ENCODE measurements at regions of chr22 and their contacts with region 1.

Region 1: DNA sequence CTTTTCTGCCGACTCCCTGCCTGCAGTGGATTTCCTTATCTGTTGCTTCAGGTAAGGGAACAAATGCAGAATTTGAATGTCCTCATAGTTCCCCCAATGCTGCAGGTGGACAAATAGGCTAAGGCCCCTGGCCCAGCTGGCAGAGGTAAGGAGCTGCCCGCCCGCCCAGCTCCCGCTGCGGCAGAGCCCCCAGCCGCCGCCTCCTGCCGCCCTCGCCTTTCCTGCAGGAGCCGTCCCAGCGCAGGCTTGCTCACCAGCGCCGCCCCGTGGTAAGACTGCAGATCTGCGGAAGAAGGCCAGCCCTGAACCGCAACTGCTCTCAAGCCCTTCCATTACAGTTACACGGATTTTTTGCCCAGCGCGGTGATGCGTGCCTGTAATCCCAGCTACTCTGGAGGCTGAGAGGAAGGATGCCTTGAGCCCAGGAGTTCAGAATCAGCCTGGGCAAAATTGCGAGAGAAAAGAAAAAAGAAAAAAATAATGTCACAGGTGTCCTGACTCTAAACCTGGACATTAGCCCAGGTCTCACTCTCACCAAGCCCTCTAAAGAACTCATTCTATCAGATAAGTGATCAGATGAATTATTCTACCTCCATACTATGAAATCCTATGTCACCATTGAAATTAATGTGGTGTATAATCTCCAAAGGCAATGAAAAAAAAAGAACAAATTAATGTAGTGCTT is 51.2 kb upstream of the EMID1 start:
- DNase-seq: peak in 1 of 2 donors; percentile 82
- H3K4me3 ChIP-seq: peak overlapping the region; percentile 7 to 47
- H3K27ac ChIP-seq: no peak overlapping the region
- H3K4me1 ChIP-seq: peaks cover 3 to 15% of the 10 kb centered on the region in 2 donors
- H3K27me3 ChIP-seq: no peaks in the 10 kb centered on the region
- CTCF ChIP-seq: peak; percentile 84 to 99 (median 96)

Region 2: DNA sequence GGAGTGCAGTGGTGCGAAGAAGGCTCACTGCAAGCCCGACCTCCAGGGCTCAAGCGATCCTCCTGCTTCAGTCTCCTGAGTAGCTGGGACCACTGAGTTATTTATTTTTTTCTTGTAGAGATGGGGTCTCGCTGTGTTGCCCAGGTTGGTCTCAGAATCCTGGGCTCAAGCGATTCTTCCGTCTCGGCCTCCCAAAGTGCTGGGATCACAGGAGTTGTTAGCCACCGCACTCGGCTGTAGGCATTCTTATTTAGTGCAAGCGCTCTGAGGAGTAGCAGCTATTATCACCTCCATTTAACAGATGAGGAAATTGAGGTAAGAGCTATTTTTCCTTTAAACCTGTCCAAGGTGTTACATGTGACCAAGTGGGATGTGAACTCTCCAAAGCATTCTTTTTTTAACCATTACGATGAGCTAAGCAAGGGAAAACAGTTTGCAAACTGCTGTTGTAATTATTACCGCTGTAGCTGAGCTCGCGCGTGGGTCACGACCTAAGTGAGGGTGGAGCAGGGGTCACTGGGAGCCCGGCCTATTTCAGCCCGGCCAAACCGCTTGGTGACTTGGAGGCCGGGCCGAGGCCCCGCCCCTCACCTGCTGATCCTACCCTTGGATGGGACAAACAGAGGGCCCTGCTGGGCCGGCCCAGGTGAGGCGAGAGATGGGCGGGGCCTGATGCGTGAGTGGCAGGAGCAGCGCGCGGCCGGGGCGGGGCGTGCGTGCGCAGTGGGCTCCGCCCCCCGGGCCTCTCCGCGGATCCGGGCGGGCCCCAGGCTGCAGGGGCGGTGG is 82.1 kb before region 1 on chr22:
- intact Hi-C with region 1: loop called (anchors 5 kb)
- DNase-seq: peak; percentile 53 to 89
- H3K4me3 ChIP-seq: peak overlapping the region; percentile 72 to 91
- H3K27ac ChIP-seq: no peak overlapping the region
- H3K4me1 ChIP-seq: peaks cover 0 to 14% of the 10 kb centered on the region in 2 donors
- H3K27me3 ChIP-seq: no peaks in the 10 kb centered on the region
- CTCF ChIP-seq: no peak

Region 3: DNA sequence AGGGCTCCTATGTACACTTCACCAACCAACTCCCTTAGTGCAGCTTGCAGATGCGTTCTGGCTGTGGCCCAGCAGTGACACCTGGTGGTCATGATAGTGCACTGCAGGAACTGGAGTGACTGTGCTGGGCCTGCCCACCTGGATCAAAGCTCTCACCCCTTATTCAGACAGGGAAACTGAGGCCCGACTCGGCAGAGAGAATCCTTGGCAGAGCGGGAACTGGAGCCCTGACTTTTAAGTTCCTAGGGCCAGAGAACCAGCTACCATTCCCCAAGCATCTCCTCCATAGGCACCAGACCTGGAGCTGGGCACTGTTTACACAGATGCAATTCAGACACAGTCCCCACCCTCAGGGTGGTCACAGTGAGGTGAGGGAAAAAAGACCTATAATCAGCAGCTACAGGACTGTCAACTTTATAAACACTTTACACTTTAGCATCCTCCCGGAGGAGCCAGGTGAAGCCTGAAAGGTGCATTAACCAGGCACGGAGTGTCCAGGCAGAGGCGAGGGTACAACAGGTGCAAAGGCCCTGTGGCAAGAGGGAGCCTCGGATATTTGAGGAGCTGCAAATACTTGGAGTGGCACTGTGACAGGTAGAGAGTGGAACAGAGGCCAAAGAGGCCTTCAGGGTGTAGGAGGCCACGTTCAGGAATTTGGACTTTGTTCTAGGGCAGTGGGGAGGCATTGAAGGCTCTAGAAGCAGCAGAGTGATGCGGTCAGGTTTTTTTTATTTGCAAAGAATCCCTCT is 91.3 kb after region 1 on chr22:
- intact Hi-C with region 1: loop called (anchors 5 kb)
- DNase-seq: peak in 1 of 2 donors; percentile 76
- H3K4me3 ChIP-seq: no peak overlapping the region
- H3K27ac ChIP-seq: no peak overlapping the region
- H3K4me1 ChIP-seq: no peaks in the 10 kb centered on the region
- H3K27me3 ChIP-seq: no peaks in the 10 kb centered on the region
- CTCF ChIP-seq: peak; percentile 90 to 98 (median 97)